ENCODE measurements at regions of chr4 and their contacts with region 1.

Region 1: GRCh38 chr4:118280501-118281218 is 72.1 kb downstream of the PRSS12 start:
- DNase-seq: peak; percentile 67
- ATAC-seq: peak; percentile 52
- H3K4me3 ChIP-seq: peak overlapping the region in 1 of 2 experiments; percentile 98; a peak in 3 of 4 replicates
- H3K27ac ChIP-seq: peak overlapping the region; percentile 84; the same call in 1 of the 2 replicates
- H3K4me1 ChIP-seq: peaks cover 6 to 21% of the 10 kb centered on the region in 2 experiments; a peak in 3 of 4 replicates
- H3K27me3 ChIP-seq: no peaks in the 10 kb centered on the region
- CTCF ChIP-seq: peak; percentile 46 to 73 (median 50); a peak in 4 of 6 replicates
- POLR2A ChIP-seq: peak; percentile 68
- RAD21 ChIP-seq: peak; percentile 80

Region 2: DNA sequence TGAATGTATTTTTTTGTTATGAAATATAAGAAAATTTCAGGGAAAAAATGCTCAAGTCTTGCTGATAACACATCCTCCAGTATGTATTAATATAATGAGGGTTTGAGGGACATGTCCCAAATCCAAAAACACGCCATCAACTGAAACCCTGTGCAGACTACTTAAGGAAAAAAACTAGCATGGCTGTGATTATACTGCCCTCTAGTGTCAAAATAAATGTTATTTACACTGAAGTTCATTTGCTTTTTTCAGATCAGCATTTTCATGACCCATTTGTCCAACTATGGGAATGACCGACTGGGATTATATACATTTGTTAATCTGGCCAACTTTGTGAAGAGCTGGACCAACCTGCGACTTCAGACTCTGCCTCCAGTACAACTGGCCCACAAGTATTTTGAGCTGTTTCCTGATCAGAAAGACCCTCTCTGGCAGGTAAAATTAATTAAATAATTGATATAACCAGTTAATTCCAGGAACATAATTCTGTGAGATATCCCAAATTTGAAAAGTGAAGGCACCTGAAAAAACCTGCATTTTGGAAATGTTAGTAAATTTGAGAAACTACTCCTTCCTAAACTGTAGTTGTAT is 56.3 kb before region 1 on chr4:
- CTCF ChIA-PET with region 1: no interaction called
- POLR2A ChIA-PET with region 1: no interaction called
- RAD21 ChIA-PET with region 1: no interaction called
- intact Hi-C with region 1: no loop called
- DNase-seq: peak; percentile 67
- ATAC-seq: peak; percentile 80
- H3K4me3 ChIP-seq: no peak overlapping the region
- H3K27ac ChIP-seq: no peak overlapping the region
- H3K4me1 ChIP-seq: no peaks in the 10 kb centered on the region
- H3K27me3 ChIP-seq: no peaks in the 10 kb centered on the region
- CTCF ChIP-seq: peak; percentile 31 to 78 (median 65); a peak in 5 of 6 replicates
- POLR2A ChIP-seq: no peak
- RAD21 ChIP-seq: peak; percentile 83

Region 3: GRCh38 chr4:118290951-118291350 is 10.3 kb after region 1 on chr4:
- CTCF ChIA-PET with region 1: no interaction called
- POLR2A ChIA-PET with region 1: no interaction called
- RAD21 ChIA-PET with region 1: no interaction called
- intact Hi-C with region 1: no loop called
- DNase-seq: no peak
- ATAC-seq: no peak
- H3K4me3 ChIP-seq: no peak overlapping the region
- H3K27ac ChIP-seq: no peak overlapping the region
- H3K4me1 ChIP-seq: no peaks in the 10 kb centered on the region
- H3K27me3 ChIP-seq: no peaks in the 10 kb centered on the region
- CTCF ChIP-seq: no peak
- POLR2A ChIP-seq: no peak
- RAD21 ChIP-seq: no peak

Region 4: GRCh38 chr4:118352843-118353533 is 72.3 kb after region 1 on chr4 and contains the start of gene PRSS12:
- CTCF ChIA-PET with region 1: interaction called, 5 read pairs
- POLR2A ChIA-PET with region 1: interaction called, 3 read pairs
- RAD21 ChIA-PET with region 1: no interaction called
- intact Hi-C with region 1: loop called (anchors 1 kb)
- DNase-seq: peak; percentile 57
- ATAC-seq: peak; percentile 93
- H3K4me3 ChIP-seq: peak within 1 kb of the TSS; percentile 51 to 75
- H3K27ac ChIP-seq: peak within 1 kb of the TSS; percentile 40; the same call in 1 of the 2 replicates
- H3K4me1 ChIP-seq: peaks cover 3 to 41% of the 10 kb centered on the region in 2 experiments; a peak in 3 of 4 replicates
- H3K27me3 ChIP-seq: no peaks in the 10 kb centered on the region
- CTCF ChIP-seq: peak; percentile 52 to 85 (median 66)
- POLR2A ChIP-seq: no peak
- RAD21 ChIP-seq: peak; percentile 44; the same call in 1 of the 2 replicates
- total RNA-seq, gene PRSS12: 13.8 TPM